B cell (primary cell): ENCODE measurements at regions of chr4 and their contacts with region 1.

Region 1: GRCh38 chr4:15396157-15396800 is 31.6 kb upstream of the C1QTNF7 start:
- DNase-seq: peak; percentile 67
- ATAC-seq: peak; percentile 71
- H3K4me3 ChIP-seq: no peak overlapping the region
- H3K4me3 Mint-ChIP-seq: no peak overlapping the region
- H3K27ac ChIP-seq: no peak overlapping the region
- H3K27ac Mint-ChIP-seq: no peak overlapping the region
- H3K4me1 ChIP-seq: peaks cover 24 to 32% of the 10 kb centered on the region in 2 donors
- H3K4me1 Mint-ChIP-seq: peaks cover 23% of the 10 kb centered on the region
- H3K27me3 ChIP-seq: no peaks in the 10 kb centered on the region
- H3K27me3 Mint-ChIP-seq: no peaks in the 10 kb centered on the region
- CTCF ChIP-seq: peak; percentile 91

Region 2: DNA sequence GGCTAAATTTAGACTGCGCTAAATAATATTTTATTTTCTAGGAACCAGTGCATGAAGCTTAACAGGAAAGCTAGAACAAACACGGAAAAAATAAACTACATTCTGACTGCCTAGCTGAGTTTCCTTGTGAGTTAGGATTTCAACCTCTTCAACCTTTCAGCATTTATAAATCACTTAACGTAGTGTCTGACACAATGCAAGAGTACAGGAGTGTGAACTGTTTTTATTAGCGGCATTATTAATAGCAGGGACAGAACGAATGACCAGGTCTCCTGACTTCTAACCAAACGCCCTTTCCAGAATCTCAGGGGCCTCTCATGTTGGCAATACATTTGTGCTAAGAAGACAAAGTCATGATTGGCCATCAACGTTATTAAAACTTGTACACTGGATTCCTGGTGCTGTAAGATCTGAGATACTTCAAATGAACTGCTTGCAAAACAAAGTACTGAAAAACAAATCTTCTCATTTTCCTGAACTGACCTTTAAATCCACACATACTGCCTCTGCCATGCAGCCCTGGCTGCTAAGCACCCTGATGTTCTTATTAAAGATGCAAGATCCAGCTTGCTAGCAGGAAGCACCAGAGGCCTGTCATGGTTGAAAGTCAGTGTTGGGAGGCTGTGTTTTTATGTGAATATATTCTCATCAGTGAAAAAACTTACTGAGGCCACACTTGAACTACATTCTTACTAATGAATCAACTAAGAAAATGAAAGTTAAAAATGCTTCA is 774.4 kb before region 1 on chr4:
- CTCF ChIA-PET with region 1: no interaction called
- POLR2A ChIA-PET with region 1: no interaction called
- intact Hi-C with region 1: no loop called
- DNase-seq: no peak
- ATAC-seq: no peak
- H3K4me3 ChIP-seq: no peak overlapping the region
- H3K4me3 Mint-ChIP-seq: no peak overlapping the region
- H3K27ac ChIP-seq: no peak overlapping the region
- H3K27ac Mint-ChIP-seq: no peak overlapping the region
- H3K4me1 ChIP-seq: no peaks in the 10 kb centered on the region
- H3K4me1 Mint-ChIP-seq: no peaks in the 10 kb centered on the region
- H3K27me3 ChIP-seq: no peaks in the 10 kb centered on the region
- H3K27me3 Mint-ChIP-seq: no peaks in the 10 kb centered on the region
- CTCF ChIP-seq: no peak

Region 3: GRCh38 chr4:15238720-15239119 is 157.6 kb before region 1 on chr4:
- CTCF ChIA-PET with region 1: interaction called, 4 read pairs
- POLR2A ChIA-PET with region 1: no interaction called
- intact Hi-C with region 1: loop called (anchors 2 kb)
- DNase-seq: peak; percentile 45
- ATAC-seq: no peak
- H3K4me3 ChIP-seq: no peak overlapping the region
- H3K4me3 Mint-ChIP-seq: no peak overlapping the region
- H3K27ac ChIP-seq: no peak overlapping the region
- H3K27ac Mint-ChIP-seq: no peak overlapping the region
- H3K4me1 ChIP-seq: peaks cover 3 to 5% of the 10 kb centered on the region in 2 donors
- H3K4me1 Mint-ChIP-seq: peaks cover 10% of the 10 kb centered on the region
- H3K27me3 ChIP-seq: no peaks in the 10 kb centered on the region
- H3K27me3 Mint-ChIP-seq: peaks cover 3% of the 10 kb centered on the region
- CTCF ChIP-seq: peak; percentile 45

Region 4: GRCh38 chr4:15375667-15376066 is 20.6 kb before region 1 on chr4:
- CTCF ChIA-PET with region 1: interaction called, 16 read pairs
- POLR2A ChIA-PET with region 1: no interaction called
- intact Hi-C with region 1: no loop called
- DNase-seq: peak; percentile 28
- ATAC-seq: no peak
- H3K4me3 ChIP-seq: peak overlapping the region in 2 of 5 experiments; percentile 0 to 31
- H3K4me3 Mint-ChIP-seq: peak overlapping the region; percentile 58
- H3K27ac ChIP-seq: peak overlapping the region; percentile 59 to 82
- H3K27ac Mint-ChIP-seq: peak overlapping the region; percentile 86
- H3K4me1 ChIP-seq: peaks cover 15 to 18% of the 10 kb centered on the region in 2 donors
- H3K4me1 Mint-ChIP-seq: peaks cover 23% of the 10 kb centered on the region
- H3K27me3 ChIP-seq: no peaks in the 10 kb centered on the region
- H3K27me3 Mint-ChIP-seq: peaks cover 12% of the 10 kb centered on the region
- CTCF ChIP-seq: no peak

Region 5: GRCh38 chr4:15385928-15386327 is 10.4 kb before region 1 on chr4:
- CTCF ChIA-PET with region 1: interaction called, 25 read pairs
- POLR2A ChIA-PET with region 1: no interaction called
- intact Hi-C with region 1: no loop called
- DNase-seq: no peak
- ATAC-seq: no peak
- H3K4me3 ChIP-seq: no peak overlapping the region
- H3K4me3 Mint-ChIP-seq: no peak overlapping the region
- H3K27ac ChIP-seq: no peak overlapping the region
- H3K27ac Mint-ChIP-seq: no peak overlapping the region
- H3K4me1 ChIP-seq: no peaks in the 10 kb centered on the region
- H3K4me1 Mint-ChIP-seq: no peaks in the 10 kb centered on the region
- H3K27me3 ChIP-seq: no peaks in the 10 kb centered on the region
- H3K27me3 Mint-ChIP-seq: peaks cover 5% of the 10 kb centered on the region
- CTCF ChIP-seq: no peak

Region 6: GRCh38 chr4:15410750-15411149 is 14.5 kb after region 1 on chr4:
- CTCF ChIA-PET with region 1: interaction called, 17 read pairs
- POLR2A ChIA-PET with region 1: no interaction called
- intact Hi-C with region 1: loop called (anchors 1 kb)
- DNase-seq: peak; percentile 57
- ATAC-seq: peak; percentile 63
- H3K4me3 ChIP-seq: peak overlapping the region in 4 of 5 experiments; percentile 34 to 42 (median 39)
- H3K4me3 Mint-ChIP-seq: peak overlapping the region; percentile 81
- H3K27ac ChIP-seq: peak overlapping the region; percentile 61 to 63
- H3K27ac Mint-ChIP-seq: peak overlapping the region; percentile 81
- H3K4me1 ChIP-seq: peaks cover 62 to 63% of the 10 kb centered on the region in 2 donors
- H3K4me1 Mint-ChIP-seq: peaks cover 69% of the 10 kb centered on the region
- H3K27me3 ChIP-seq: no peaks in the 10 kb centered on the region
- H3K27me3 Mint-ChIP-seq: no peaks in the 10 kb centered on the region
- CTCF ChIP-seq: no peak